Dorsolateral prefrontal cortex (tissue), 120 donors: ENCODE measurements at regions of chr19 and their contacts with region 1.

Region 1: GRCh38 chr19:2820112-2820702 is 539 bp downstream of the ZNF554 start:
- DNase-seq: peak in 1 of 10 donors; percentile 58
- H3K4me3 ChIP-seq: peak overlapping the region; percentile 68 to 97 (median 85)
- H3K27ac ChIP-seq: peak overlapping the region in 46 of 59 donors; percentile 5 to 87 (median 65)
- H3K27me3 ChIP-seq: no peaks in the 10 kb centered on the region
- CTCF ChIP-seq: no peak

Region 2: DNA sequence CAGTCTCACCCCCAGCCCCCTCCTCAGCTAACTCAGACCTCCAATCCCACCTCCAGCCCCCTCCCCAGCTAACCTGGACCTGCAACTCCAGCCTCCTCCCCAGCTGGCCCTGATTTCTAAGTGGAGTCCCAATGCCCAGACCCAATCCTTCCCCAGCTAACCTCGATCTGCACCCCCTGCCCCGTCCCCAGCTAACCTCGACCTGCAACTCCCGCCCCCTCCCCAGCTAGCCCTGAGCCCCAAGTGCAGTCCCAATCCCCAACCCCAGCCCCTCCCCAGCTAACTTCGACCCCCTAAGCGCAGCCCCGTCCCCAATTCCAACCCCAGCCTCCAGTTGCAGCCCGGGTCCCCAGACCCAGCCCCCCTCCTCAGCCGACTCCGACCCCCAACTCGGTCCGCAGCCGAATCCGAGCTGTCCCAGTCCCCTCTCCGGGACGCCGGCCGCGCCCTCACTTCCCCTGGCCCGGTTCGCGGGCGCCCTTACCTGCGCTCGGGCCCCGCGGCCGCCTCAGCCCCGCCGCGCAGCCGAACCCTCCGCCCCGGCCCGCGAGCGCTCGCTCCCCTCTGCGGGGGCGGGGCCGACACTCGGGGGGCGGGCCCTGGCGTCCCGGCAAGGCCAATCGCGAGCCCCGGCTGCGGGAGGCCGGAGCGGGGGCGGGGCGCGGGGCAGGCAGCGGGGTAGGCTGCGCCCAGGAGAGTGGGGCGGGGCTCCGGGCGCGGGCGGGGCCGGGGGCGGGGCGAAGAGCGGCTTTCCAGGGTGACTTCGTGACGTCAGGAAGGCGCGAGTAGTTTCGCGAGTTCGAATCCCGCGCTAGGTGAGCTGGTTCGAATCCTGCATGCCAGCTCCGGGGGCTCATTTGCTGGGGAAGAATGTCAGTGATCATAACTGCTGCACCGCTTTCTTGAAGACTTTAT is 117.8 kb before region 1 on chr19 and contains the start of gene GNG7:
- intact Hi-C with region 1: no loop called
- DNase-seq: peak; percentile 86 to 99 (median 94)
- H3K4me3 ChIP-seq: peak within 1 kb of the TSS; percentile 15 to 76 (median 63)
- H3K27ac ChIP-seq: peak within 1 kb of the TSS in 45 of 59 donors; percentile 18 to 99 (median 70)
- H3K27me3 ChIP-seq: no peaks in the 10 kb centered on the region
- CTCF ChIP-seq: peak in 3 of 56 donors; percentile 7 to 23 (median 19)
- total RNA-seq, gene GNG7: 71.9 to 184 (median 98.1) TPM

Region 3: DNA sequence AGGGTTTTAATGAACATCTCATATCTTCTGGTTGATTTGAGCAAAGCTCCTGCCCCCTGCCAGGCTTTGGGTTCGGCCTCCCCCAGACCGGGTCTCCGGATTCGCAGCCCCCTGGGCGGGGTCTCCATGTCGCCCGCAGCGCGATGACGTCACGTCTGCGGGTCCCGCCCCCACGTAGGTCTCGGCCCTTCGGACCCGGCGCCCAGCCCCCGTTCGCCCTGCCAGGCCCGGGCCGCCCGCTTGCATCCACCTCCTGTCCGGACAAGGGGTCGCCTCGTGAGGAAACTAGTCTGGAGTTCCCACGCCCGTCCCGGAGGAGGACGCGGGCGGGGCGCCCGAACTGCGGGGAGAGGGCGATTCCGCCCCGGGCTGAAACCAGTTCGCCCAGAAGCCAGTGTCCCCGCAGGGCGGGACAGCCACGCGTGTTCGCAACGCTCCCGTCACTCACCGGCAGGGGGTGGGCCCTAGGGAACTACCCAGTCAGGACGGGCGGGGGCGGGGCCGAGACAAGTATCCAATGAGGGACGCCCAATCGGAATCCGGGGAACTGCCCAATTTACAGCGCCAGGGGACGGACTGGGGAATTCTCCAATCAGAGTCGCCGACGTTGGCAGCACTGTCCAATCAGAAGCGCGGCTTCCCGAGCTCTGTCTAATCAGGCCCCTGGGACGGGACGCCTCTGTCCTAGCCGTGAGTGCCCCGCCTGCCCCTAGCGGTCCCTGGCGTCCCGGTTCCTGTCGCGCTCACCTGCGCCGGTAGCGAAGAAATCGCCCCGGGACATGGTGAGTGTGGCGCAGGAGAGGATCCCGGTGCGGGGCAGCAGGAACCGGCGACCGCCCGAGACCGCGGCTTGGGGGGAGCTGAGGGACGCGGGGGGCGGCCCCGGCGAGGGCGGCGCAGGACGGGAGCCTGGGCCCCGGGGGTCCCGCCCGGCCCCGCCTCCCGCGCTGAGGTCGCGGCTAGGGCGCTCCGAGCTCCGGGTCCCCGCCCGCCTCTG is 20.9 kb after region 1 on chr19 and contains the start of gene ZNF555:
- intact Hi-C with region 1: loop called in 1 of 2 experiments (anchors 2 kb)
- DNase-seq: peak; percentile 99 to 100 (median 100)
- H3K4me3 ChIP-seq: peak within 1 kb of the TSS; percentile 61 to 98 (median 87)
- H3K27ac ChIP-seq: peak within 1 kb of the TSS; percentile 30 to 97 (median 87)
- H3K27me3 ChIP-seq: no peaks in the 10 kb centered on the region
- CTCF ChIP-seq: peak in 55 of 56 donors; percentile 48 to 83 (median 68)
- total RNA-seq, gene ZNF555: 7.6 to 20.2 (median 12.8) TPM

Region 4: GRCh38 chr19:2869618-2870017 is 49.4 kb after region 1 on chr19:
- intact Hi-C with region 1: loop called in 1 of 2 experiments (anchors 10 kb)
- DNase-seq: no peak
- H3K4me3 ChIP-seq: no peak overlapping the region
- H3K27ac ChIP-seq: no peak overlapping the region
- H3K27me3 ChIP-seq: no peaks in the 10 kb centered on the region
- CTCF ChIP-seq: no peak

Region 5: DNA sequence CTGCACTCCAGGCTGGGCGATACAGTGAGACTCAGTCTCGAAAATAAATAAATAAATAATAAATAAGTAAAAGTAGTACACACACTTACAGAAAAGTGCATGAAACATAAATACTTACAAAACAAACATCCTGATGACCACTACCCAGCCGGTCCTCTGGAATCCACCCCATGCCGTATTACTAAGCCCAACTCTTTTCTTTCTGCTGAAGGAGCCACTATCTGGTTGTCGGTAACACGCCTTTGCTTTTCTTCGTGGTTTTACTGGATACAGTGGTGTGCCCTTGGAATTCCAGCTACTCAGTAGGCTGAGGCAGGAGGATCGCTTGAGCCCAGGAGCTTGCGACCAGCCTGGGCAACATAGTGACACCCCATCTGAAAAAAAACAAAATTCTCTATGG is 443.7 kb after region 1 on chr19:
- intact Hi-C with region 1: no loop called
- DNase-seq: no peak
- H3K4me3 ChIP-seq: no peak overlapping the region
- H3K27ac ChIP-seq: no peak overlapping the region
- H3K27me3 ChIP-seq: no peaks in the 10 kb centered on the region
- CTCF ChIP-seq: no peak